Dendritic cell treated with granulocyte-macrophage colony-stimulating factor and Interleukin-4, amounts not matched to agents 40 ng/mL and 50 ng/mL, for 4 days (primary cell): ENCODE measurements at regions of chr2 and their contacts with region 1.

Region 1: GRCh38 chr2:74529357-74530238 is at the starts of genes AUP1 and HTRA2:
- H3K4me3 Mint-ChIP-seq: peak within 1 kb of the TSS; percentile 99
- H3K27ac Mint-ChIP-seq: peak within 1 kb of the TSS; percentile 97
- H3K4me1 Mint-ChIP-seq: peaks cover 48% of the 10 kb centered on the region
- H3K27me3 Mint-ChIP-seq: no peaks in the 10 kb centered on the region

Region 2: DNA sequence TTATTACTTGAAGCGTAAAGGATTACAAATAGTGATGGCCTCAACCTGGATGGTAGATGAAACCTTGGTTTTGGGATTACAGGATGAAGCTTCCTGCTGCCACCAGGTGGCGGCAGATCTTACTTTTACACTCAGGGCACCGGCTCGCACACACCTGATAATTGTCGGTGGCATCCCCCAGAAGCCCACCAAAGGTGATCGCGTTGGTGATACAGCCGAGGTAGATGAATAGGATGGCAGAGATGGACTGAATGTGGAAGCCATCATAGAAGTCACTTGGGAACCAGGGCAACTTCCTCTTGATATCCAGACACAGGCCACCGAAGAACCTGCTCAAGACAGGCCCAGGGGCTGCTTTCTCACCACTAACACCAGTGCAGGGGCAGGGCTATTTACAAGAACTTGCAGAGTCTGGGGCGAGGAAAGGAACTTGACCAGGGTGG is 279.4 kb before region 1 on chr2:
- intact Hi-C with region 1: loop called (anchors 5 kb)
- H3K4me3 Mint-ChIP-seq: no peak overlapping the region
- H3K27ac Mint-ChIP-seq: no peak overlapping the region
- H3K4me1 Mint-ChIP-seq: peaks cover 7% of the 10 kb centered on the region
- H3K27me3 Mint-ChIP-seq: no peaks in the 10 kb centered on the region

Region 3: DNA sequence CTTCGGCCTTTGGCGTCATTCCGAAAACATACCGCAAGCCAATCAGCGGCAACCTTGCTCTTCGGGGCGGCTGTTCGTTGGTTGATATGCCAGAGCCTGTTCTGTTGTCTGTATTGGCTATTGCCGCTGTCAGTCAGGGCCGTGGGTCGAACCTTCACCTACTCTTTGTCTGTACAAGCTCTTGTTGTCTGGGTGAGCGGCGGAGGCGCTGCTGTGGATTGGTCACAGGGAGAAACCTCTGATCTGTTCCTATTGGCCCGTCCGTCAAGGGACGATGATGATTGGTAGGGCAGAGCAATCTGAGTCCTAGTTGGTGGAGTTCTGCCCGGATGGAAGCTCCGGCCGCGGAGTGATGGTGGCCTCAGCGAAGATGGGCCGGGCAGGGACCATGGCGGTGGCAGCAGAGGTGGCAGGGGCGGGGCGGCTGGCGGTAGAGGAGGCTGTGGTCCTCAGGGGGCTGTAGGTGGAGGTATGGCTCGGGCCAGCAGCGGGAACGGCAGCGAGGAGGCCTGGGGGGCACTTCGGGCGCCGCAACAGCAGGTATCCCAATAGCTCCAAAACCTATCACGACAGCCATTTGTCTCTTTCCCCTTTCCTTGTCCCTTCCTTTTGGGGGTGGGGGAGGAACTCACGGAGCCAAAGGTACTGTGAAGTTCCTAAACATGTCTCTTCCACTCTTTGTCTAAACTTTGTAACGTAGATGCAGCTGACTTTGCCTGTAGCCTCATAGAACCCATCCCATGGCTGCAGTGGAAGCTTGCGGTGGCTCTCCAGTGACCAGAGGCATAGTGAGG is 71.3 kb before region 1 on chr2 and contains the start of gene WBP1:
- intact Hi-C with region 1: loop called (anchors 2 kb)
- H3K4me3 Mint-ChIP-seq: peak within 1 kb of the TSS; percentile 85
- H3K27ac Mint-ChIP-seq: peak within 1 kb of the TSS; percentile 94
- H3K4me1 Mint-ChIP-seq: peaks cover 60% of the 10 kb centered on the region
- H3K27me3 Mint-ChIP-seq: no peaks in the 10 kb centered on the region

Region 4: DNA sequence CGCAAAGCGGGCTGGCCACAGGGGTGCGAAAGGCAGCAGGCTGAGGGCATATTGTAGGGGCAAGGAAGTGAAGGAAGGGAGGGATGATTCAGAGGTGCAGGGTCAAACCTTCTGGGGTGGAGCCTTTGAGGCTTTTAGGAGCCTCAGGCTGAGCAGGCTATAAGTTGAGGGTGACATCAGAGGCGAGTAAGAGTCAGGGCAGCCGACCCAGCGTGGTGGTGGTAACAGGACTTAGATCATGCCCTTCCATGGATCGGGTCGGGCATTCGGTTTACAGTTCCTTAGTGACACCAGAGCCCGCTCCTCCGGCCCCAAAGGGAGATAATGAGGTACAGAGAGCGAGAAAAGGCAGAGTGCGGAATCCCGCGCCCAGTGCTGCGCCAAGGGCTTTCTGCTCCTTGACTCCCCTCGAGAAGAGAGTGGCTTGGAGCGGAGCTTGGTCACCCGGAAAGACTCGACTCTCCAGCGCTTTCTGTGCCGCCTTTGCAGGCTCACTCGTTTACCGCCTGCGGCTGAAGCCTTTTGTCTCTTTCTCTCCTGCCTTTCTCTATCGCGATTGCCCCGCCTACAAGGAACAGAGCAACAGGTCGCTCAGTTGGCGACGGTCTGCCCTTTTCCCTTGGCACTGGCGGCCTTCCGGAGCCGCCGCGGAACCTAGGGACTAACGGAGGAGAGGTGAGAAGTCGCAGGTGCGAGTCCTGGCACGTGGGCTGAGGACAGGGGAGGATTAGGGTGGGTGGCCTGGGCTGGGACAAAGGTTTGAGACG is 30.9 kb before region 1 on chr2:
- intact Hi-C with region 1: loop called (anchors 5 kb)
- H3K4me3 Mint-ChIP-seq: peak overlapping the region; percentile 69
- H3K27ac Mint-ChIP-seq: peak overlapping the region; percentile 45
- H3K4me1 Mint-ChIP-seq: peaks cover 52% of the 10 kb centered on the region
- H3K27me3 Mint-ChIP-seq: peaks cover 67% of the 10 kb centered on the region

Region 5: GRCh38 chr2:74507145-74507925 is 22.3 kb before region 1 on chr2 and contains the start of gene PCGF1:
- intact Hi-C with region 1: loop called (anchors 1 kb)
- H3K4me3 Mint-ChIP-seq: peak within 1 kb of the TSS; percentile 89
- H3K27ac Mint-ChIP-seq: peak within 1 kb of the TSS; percentile 95
- H3K4me1 Mint-ChIP-seq: peaks cover 55% of the 10 kb centered on the region
- H3K27me3 Mint-ChIP-seq: peaks cover 42% of the 10 kb centered on the region

Region 6: GRCh38 chr2:74587664-74588277 is 58.2 kb after region 1 on chr2:
- intact Hi-C with region 1: loop called (anchors 5 kb)
- H3K4me3 Mint-ChIP-seq: no peak overlapping the region
- H3K27ac Mint-ChIP-seq: no peak overlapping the region
- H3K4me1 Mint-ChIP-seq: peaks cover 44% of the 10 kb centered on the region
- H3K27me3 Mint-ChIP-seq: peaks cover 2% of the 10 kb centered on the region

Region 7: DNA sequence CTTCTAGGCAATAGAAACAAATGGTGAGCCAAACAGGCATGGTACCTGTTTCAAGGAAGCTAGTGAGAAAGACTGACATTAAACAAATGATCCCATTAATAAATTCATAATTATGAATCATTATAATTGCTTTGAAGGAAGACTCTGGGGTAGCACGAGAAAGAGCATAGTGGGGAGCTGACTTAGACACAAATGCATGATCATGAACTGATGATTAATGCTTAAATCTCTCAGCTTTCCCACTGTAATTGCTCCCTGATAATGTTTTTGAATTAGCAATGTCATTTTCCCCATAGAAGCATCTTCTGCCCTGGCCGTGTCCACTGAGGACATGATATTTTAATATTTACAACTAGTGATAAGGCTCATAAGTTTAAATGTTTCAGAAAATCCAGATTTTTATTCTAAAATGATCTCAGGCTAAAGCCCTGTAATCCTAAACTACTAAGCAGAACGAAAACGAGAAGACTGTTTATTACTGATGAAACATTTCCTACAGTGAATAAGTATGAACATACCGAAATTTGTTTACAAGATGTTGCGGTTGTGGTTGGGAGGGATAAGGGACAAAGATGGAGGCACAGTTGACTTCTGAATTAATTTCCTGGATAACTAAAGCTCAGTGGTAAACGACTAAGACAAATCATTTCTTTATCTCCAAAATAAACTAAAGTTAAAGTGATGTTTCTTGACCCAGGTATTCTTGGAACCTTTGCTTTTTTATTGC is 717.0 kb after region 1 on chr2:
- intact Hi-C with region 1: no loop called
- H3K4me3 Mint-ChIP-seq: no peak overlapping the region
- H3K27ac Mint-ChIP-seq: no peak overlapping the region
- H3K4me1 Mint-ChIP-seq: no peaks in the 10 kb centered on the region
- H3K27me3 Mint-ChIP-seq: peaks cover 2% of the 10 kb centered on the region